CD8-positive, alpha-beta memory T cell (primary cell): ENCODE measurements at regions of chr16 and their contacts with region 1.

Region 1: DNA sequence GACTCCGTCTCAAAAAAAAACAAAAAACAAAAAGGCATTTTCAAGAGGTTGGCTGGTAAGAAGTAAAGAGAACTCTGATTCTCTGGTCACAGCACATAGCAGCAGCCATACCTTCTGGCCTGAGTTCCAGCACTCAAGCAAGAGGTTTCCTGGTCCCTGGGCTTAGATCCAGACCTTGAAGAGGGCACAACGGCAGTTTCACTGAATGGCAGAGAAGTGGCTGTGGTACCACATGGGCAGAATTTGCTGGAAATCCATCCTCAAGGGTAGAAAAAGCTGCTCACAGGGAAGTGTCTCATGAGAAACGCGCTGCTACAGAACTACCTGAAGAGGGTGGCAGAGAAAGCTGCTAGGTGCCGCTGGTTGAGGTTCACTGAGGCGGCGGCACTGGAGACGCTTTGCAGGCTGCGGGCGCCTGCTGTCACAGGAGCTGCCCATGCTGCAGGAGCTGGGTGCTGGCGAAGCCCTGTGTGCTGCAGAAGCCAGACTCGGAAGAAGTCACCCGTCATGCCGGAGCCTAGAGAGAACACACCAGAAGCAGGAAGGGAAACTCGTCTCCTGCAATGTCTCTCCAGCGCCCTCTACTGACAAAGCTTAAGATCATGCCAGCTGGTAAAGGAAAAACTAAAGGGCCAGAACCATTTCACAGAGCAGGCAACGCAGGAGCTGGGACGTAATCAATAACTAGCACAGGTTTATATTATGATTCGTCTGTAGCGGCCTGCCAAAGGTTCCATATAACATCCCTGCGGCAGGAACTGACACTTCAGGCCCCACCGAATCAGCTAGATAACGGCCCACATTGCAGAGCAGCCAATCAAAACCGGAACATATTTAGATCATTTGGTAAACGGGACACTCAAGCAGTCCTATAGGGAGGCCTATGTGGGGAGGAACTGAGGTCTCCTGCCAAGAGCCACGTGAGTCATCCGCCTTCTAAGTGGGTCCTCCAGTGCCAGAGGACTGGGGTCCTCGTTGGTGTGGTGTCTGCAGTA is 5.4 kb upstream of the ZNF213 start:
- DNase-seq: peak; percentile 64 to 89 (median 85)
- H3K4me3 ChIP-seq: peak overlapping the region; percentile 89
- H3K4me3 Mint-ChIP-seq: peak overlapping the region; percentile 87 to 96 (median 95)
- H3K27ac ChIP-seq: peak overlapping the region; percentile 62
- H3K27ac Mint-ChIP-seq: peak overlapping the region; percentile 71 to 96 (median 88)
- H3K4me1 ChIP-seq: peaks cover 34% of the 10 kb centered on the region
- H3K4me1 Mint-ChIP-seq: peaks cover 43 to 66% (median 52%) of the 10 kb centered on the region in 3 donors
- H3K27me3 ChIP-seq: no peaks in the 10 kb centered on the region
- H3K27me3 Mint-ChIP-seq: no peaks in the 10 kb centered on the region

Region 2: DNA sequence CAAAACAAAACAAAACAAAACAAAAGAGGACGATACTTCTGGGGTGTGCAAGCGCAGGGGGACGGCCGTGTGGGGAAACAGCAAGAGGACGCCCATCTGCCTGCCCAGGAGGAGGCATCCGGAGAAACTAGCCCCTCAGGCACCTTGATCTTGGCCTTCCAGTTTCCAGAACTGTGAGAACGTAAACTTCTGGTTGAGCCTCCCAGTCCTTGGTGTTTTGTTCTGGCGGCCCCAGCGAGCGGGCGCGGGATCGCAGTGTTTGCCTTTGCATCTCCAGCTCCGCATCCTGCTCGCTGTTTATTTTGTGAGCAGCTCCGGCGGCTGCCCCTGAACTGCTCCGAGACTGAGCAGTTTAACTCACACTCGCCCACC is 84.1 kb before region 1 on chr16:
- CTCF ChIA-PET with region 1: interaction called, 21 read pairs
- POLR2A ChIA-PET with region 1: interaction called, 8 read pairs
- DNase-seq: no peak
- H3K4me3 ChIP-seq: peak overlapping the region; percentile 51
- H3K4me3 Mint-ChIP-seq: peak overlapping the region; percentile 56 to 89 (median 83)
- H3K27ac ChIP-seq: no peak overlapping the region
- H3K27ac Mint-ChIP-seq: peak overlapping the region in 3 of 8 donors; percentile 36 to 50 (median 42)
- H3K4me1 ChIP-seq: peaks cover 27% of the 10 kb centered on the region
- H3K4me1 Mint-ChIP-seq: peaks cover 14 to 33% (median 24%) of the 10 kb centered on the region in 3 donors
- H3K27me3 ChIP-seq: peaks cover 45% of the 10 kb centered on the region
- H3K27me3 Mint-ChIP-seq: peaks cover 14 to 34% of the 10 kb centered on the region in 2 donors

Region 3: DNA sequence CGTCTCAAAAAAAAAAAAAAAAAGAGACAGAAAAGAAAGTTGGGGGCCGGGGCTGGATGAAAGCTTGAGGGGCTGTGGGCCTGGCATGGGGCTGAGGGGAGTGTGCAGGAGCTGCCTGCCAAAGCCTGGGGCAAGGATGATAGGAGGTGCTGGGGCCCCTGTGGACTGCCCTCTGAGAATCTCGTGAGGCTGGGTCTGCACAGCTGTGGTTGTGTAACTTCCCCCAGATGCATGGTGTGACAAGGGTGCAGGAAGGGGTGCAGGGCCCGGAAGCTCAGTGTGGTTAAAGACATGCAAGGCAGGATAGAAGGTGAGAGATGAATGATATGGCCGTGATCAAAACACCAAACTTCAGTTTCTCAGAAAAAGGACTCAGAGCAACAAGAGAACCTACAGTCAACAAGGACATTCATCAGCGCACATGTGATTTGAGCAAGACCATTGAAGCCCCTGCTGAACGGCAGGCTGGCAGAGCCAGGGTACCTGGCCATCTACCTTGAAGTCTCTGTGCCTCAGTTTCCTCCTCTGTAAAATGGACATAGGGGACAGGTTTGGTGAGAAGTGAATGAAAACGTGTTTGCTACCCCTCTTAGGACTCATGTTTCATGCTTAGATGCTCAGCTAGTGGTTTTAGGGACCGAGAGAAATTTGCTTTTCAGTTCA is 54.4 kb before region 1 on chr16:
- CTCF ChIA-PET with region 1: interaction called, 99 read pairs
- POLR2A ChIA-PET with region 1: interaction called, 10 read pairs
- DNase-seq: peak; percentile 68 to 94 (median 90)
- H3K4me3 ChIP-seq: peak overlapping the region; percentile 19
- H3K4me3 Mint-ChIP-seq: peak overlapping the region; percentile 58 to 91 (median 79)
- H3K27ac ChIP-seq: peak overlapping the region; percentile 45
- H3K27ac Mint-ChIP-seq: peak overlapping the region; percentile 88 to 97 (median 95)
- H3K4me1 ChIP-seq: peaks cover 94% of the 10 kb centered on the region
- H3K4me1 Mint-ChIP-seq: peaks cover 89 to 97% (median 94%) of the 10 kb centered on the region in 3 donors
- H3K27me3 ChIP-seq: no peaks in the 10 kb centered on the region
- H3K27me3 Mint-ChIP-seq: no peaks in the 10 kb centered on the region

Region 4: GRCh38 chr16:3118204-3118806 is 11.1 kb before region 1 on chr16:
- CTCF ChIA-PET with region 1: interaction called, 19 read pairs
- POLR2A ChIA-PET with region 1: interaction called, 4 read pairs
- DNase-seq: no peak
- H3K4me3 ChIP-seq: no peak overlapping the region
- H3K4me3 Mint-ChIP-seq: no peak overlapping the region
- H3K27ac ChIP-seq: no peak overlapping the region
- H3K27ac Mint-ChIP-seq: no peak overlapping the region
- H3K4me1 ChIP-seq: peaks cover 2% of the 10 kb centered on the region
- H3K4me1 Mint-ChIP-seq: peaks cover 2 to 5% (median 4%) of the 10 kb centered on the region in 3 donors
- H3K27me3 ChIP-seq: no peaks in the 10 kb centered on the region
- H3K27me3 Mint-ChIP-seq: no peaks in the 10 kb centered on the region

Region 5: DNA sequence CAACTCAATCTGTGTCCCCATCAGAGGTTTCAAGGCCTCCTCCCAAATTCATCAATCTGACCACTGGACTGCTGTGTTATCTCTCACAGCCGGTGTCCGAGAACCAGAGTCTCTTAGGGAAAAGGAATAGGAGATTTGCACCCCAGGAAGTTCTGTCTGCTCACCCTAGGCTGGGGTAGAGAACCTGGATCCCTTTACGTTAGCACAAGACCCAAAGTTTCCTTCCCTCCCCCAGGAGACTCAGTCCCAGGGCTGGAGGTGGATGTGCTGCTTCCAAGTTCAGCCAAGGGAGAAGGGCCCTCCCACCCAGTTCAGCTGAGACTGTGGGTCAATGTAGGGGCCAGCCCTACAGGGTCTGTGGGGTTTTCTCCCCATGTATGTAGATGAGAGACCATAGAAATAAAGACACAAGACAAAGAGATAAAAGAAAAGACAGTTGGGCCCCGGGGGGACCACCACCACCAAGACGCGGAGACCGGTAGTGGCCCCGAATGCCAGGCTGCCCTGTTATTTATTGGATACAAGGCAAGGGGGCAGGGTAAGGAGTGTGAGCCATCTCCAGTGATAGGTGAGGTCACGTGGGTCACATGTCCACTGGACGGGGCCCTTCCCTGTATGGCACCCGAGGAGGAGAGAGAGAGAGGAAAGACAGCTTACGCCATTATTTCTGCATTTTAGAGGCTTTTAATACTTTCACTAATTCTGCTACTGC is 35.8 kb after region 1 on chr16:
- CTCF ChIA-PET with region 1: interaction called, 48 read pairs
- POLR2A ChIA-PET with region 1: no interaction called
- DNase-seq: no peak
- H3K4me3 ChIP-seq: peak overlapping the region; percentile 58
- H3K4me3 Mint-ChIP-seq: peak overlapping the region in 6 of 7 donors; percentile 50 to 83 (median 66)
- H3K27ac ChIP-seq: peak overlapping the region; percentile 54
- H3K27ac Mint-ChIP-seq: peak overlapping the region; percentile 39 to 86 (median 82)
- H3K4me1 ChIP-seq: peaks cover 5% of the 10 kb centered on the region
- H3K4me1 Mint-ChIP-seq: peaks cover 10 to 16% (median 13%) of the 10 kb centered on the region in 3 donors
- H3K27me3 ChIP-seq: no peaks in the 10 kb centered on the region
- H3K27me3 Mint-ChIP-seq: peaks cover 0 to 1% of the 10 kb centered on the region in 2 donors